Activated B cell treated with CpG ODN at 0.5 μM for 24 hours (primary cell): ENCODE measurements at regions of chr19 and their contacts with region 1.

Region 1: GRCh38 chr19:7903244-7904073 is at the start of gene MAP2K7:
- DNase-seq: peak; percentile 99
- ATAC-seq: peak; percentile 91
- H3K4me3 Mint-ChIP-seq: peak within 1 kb of the TSS; percentile 89
- H3K27ac Mint-ChIP-seq: peak within 1 kb of the TSS; percentile 91
- H3K4me1 Mint-ChIP-seq: peaks cover 33% of the 10 kb centered on the region
- H3K27me3 Mint-ChIP-seq: no peaks in the 10 kb centered on the region
- CTCF ChIP-seq: no peak
- total RNA-seq, gene MAP2K7: 46.3 and 52.8 TPM in 2 replicates

Region 2: GRCh38 chr19:7868676-7869452 is 34.6 kb before region 1 on chr19:
- CTCF ChIA-PET with region 1: interaction called, 5 read pairs
- POLR2A ChIA-PET with region 1: interaction called, 13 read pairs
- intact Hi-C with region 1: loop called (anchors 1 kb)
- DNase-seq: peak; percentile 83
- ATAC-seq: peak; percentile 75
- H3K4me3 Mint-ChIP-seq: peak overlapping the region; percentile 81
- H3K27ac Mint-ChIP-seq: peak overlapping the region; percentile 73
- H3K4me1 Mint-ChIP-seq: peaks cover 41% of the 10 kb centered on the region
- H3K27me3 Mint-ChIP-seq: peaks cover 30% of the 10 kb centered on the region
- CTCF ChIP-seq: peak; percentile 56

Region 3: DNA sequence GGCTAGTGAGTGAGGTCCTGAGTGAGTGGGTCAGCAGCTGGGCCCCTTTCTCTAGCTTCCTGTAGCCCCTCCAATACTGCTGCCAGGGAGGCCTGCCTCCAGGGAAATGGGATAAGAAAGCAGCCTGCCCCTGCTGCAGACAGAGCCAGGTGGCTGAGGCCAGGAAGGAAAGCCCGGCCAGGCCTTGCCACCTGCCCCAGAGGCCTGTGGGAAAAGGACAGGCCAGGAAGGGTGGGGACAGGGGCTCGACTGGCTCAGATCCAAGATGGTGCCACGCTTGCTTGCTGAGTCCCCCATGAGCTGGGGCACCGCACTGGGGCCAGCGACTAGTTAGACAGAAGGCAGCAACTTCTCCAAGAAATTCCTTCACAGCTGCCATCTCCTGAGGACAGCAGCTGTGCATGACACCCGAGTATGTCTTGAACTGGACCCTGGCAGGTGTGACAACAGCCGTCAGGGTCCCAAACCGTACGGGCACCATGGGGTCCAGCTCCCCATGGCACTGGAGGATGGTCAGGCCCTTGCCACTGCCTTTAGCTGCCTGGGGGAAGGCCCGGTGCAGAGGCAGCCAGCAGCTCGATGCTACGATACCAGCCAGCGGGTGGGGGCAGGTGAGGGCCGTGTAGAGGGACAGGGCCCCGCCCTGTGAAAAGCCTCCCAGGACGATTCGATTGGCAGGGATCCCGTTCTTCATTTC is 24.2 kb before region 1 on chr19:
- CTCF ChIA-PET with region 1: no interaction called
- POLR2A ChIA-PET with region 1: no interaction called
- intact Hi-C with region 1: no loop called
- DNase-seq: no peak
- ATAC-seq: no peak
- H3K4me3 Mint-ChIP-seq: no peak overlapping the region
- H3K27ac Mint-ChIP-seq: no peak overlapping the region
- H3K4me1 Mint-ChIP-seq: peaks cover 4% of the 10 kb centered on the region
- H3K27me3 Mint-ChIP-seq: peaks cover 7% of the 10 kb centered on the region
- CTCF ChIP-seq: no peak

Region 4: DNA sequence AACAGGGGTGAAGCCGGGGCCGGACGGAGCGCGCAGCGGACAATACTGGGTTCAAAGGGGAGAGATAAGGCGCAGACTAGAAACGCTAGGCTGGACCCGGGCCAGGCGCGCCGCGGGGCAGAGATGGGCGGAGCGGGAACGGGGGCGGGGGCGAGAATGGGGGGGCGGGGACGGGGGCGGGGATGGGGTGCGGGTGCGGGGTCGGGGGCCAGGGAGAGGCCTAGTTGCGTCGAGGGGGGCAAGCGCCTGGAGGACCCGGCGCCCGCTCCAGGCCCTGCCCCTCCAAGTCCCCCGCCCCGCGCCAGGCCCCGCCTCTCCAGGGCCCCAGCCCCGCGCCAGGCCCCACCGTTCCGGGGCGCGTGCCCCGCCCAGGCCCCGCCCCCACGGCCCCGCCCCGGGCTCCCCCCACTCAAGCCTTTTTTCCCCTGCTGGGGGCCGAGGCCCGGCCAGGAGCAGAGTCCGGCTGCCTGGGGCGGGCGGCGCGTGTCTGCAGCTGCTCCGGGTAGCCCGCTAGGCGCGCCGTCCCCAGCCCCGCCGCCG is 305.5 kb after region 1 on chr19 and contains the start of gene CERS4:
- CTCF ChIA-PET with region 1: no interaction called
- POLR2A ChIA-PET with region 1: no interaction called
- intact Hi-C with region 1: loop called (anchors 1 kb)
- DNase-seq: peak; percentile 81
- ATAC-seq: peak; percentile 86
- H3K4me3 Mint-ChIP-seq: peak within 1 kb of the TSS; percentile 96
- H3K27ac Mint-ChIP-seq: peak within 1 kb of the TSS; percentile 81
- H3K4me1 Mint-ChIP-seq: peaks cover 53% of the 10 kb centered on the region
- H3K27me3 Mint-ChIP-seq: no peaks in the 10 kb centered on the region
- CTCF ChIP-seq: no peak
- total RNA-seq, gene CERS4: 112 and 114 TPM in 2 replicates